Endothelial cell of umbilical vein (primary cell): ENCODE measurements at regions of chr11 and their contacts with region 1.

Region 1: GRCh38 chr11:100930185-100930778 is 199.3 kb downstream of the PGR start:
- DNase-seq: peak; percentile 64
- H3K4me3 ChIP-seq: no peak overlapping the region
- H3K27ac ChIP-seq: no peak overlapping the region
- H3K4me1 ChIP-seq: peaks cover 4% of the 10 kb centered on the region
- H3K27me3 ChIP-seq: no peaks in the 10 kb centered on the region
- CTCF ChIP-seq: peak; percentile 44 to 49
- POLR2A ChIP-seq: no peak

Region 2: DNA sequence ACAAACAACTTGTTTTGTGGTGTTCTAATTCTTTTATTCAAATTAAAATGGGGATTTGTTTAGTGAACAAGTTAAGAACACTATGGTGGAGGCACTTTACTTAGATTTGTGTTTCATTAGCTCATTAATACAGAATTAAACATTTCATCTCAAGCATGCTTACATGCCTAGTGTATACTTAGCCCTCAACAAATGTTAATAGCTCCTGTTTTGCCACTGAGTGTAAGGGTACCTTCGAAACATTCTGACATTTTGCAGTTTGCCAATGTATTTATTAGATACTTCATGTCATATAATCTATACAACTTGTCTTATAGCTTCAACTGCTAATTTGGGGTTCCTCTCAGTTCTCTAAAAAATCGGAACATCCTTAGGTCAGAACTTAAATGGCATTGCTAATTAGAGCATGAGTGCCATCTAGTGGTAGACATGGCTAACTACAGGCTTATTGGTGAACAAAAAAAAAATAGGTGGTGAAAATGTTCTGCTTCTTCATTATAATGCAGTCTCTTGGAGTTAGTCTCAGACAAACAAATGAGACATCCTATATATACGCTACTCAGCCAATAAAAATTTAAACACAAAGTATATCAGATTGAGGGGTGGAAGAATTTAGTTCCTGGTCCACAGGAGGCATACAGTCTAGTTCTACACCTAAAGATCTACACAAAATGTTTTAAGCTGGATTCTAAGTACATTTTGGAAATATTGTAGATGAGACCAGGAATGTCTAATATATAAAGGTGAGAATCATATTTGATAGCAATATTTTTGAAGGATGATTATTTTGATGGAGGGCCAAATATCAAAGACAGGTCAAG is 1914.4 kb before region 1 on chr11:
- CTCF ChIA-PET with region 1: no interaction called
- POLR2A ChIA-PET with region 1: no interaction called
- dilution Hi-C with region 1: no loop called
- intact Hi-C with region 1: loop called (anchors 5 kb)
- DNase-seq: peak; percentile 38
- H3K4me3 ChIP-seq: no peak overlapping the region
- H3K27ac ChIP-seq: no peak overlapping the region
- H3K4me1 ChIP-seq: no peaks in the 10 kb centered on the region
- H3K27me3 ChIP-seq: peaks cover 2 to 4% of the 10 kb centered on the region in 2 experiments
- CTCF ChIP-seq: peak; percentile 46 to 59
- POLR2A ChIP-seq: no peak

Region 3: GRCh38 chr11:100681064-100681502 is 249.2 kb before region 1 on chr11:
- CTCF ChIA-PET with region 1: interaction called, 3 read pairs
- POLR2A ChIA-PET with region 1: no interaction called
- dilution Hi-C with region 1: no loop called
- intact Hi-C with region 1: loop called (anchors 1 kb)
- DNase-seq: no peak
- H3K4me3 ChIP-seq: no peak overlapping the region
- H3K27ac ChIP-seq: no peak overlapping the region
- H3K4me1 ChIP-seq: no peaks in the 10 kb centered on the region
- H3K27me3 ChIP-seq: no peaks in the 10 kb centered on the region
- CTCF ChIP-seq: no peak
- POLR2A ChIP-seq: no peak

Region 4: DNA sequence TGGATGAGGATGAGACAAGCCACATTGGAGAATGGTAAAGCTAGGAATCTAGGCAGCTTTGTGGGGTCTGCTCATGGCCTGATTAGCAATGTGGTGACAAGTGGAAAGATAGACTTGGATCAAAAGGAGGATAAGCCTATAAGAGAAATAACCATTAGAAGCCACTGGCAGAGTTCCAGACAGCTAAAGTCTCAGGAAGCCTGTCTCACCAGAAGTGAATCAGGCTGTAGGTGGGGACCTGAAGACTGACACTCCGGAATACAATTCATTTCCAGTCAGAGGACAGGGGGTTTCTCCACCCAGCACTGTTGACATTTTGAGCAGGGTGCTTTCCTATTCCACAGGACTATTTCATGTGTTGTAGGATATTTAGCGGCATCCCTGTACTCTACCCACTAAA is 113.5 kb before region 1 on chr11:
- CTCF ChIA-PET with region 1: no interaction called
- POLR2A ChIA-PET with region 1: no interaction called
- dilution Hi-C with region 1: no loop called
- intact Hi-C with region 1: no loop called
- DNase-seq: peak; percentile 58
- H3K4me3 ChIP-seq: no peak overlapping the region
- H3K27ac ChIP-seq: no peak overlapping the region
- H3K4me1 ChIP-seq: peaks cover 8% of the 10 kb centered on the region
- H3K27me3 ChIP-seq: no peaks in the 10 kb centered on the region
- CTCF ChIP-seq: no peak
- POLR2A ChIP-seq: no peak

Region 5: DNA sequence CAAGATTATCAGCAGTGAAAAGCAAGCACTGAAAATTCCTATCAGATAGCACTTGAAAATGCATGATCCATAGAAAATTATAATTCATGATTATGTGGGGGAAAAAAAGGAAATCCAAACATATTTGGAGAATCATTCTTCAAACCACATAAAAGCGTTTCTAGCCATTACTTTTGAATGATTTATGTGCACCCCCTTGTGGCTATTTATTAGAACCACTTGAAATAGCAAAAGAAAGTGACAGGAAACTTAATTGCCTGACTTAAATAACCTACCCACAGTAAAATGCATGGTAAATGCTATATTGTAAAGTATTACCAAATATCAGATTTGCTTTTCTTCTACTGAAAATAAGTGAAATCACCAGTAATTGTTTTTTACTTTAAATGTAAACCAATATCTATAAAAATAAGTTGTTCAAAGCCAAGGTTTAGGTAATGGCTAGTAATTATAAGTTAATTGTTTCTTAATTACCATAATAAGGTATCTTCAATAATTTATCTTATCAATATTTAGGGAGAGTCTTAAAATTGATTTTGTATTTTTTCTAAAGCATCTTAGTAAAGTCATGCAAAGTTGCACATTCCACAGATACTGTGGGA is 74.7 kb before region 1 on chr11:
- CTCF ChIA-PET with region 1: no interaction called
- POLR2A ChIA-PET with region 1: no interaction called
- dilution Hi-C with region 1: no loop called
- intact Hi-C with region 1: loop called (anchors 2 kb)
- DNase-seq: peak; percentile 61
- H3K4me3 ChIP-seq: no peak overlapping the region
- H3K27ac ChIP-seq: no peak overlapping the region
- H3K4me1 ChIP-seq: no peaks in the 10 kb centered on the region
- H3K27me3 ChIP-seq: no peaks in the 10 kb centered on the region
- CTCF ChIP-seq: peak; percentile 36 to 41
- POLR2A ChIP-seq: no peak